ENCODE measurements at regions of chr3 and their contacts with region 1.

Region 1: GRCh38 chr3:181176601-181177000 is 187.1 kb upstream of the DNAJC19 start:
- DNase-seq: peak; percentile 21
- ATAC-seq: peak; percentile 68; the same call in 1 of the 2 replicates
- H3K4me3 Mint-ChIP-seq: no peak overlapping the region
- H3K27ac Mint-ChIP-seq: no peak overlapping the region
- H3K4me1 Mint-ChIP-seq: peaks cover 13% of the 10 kb centered on the region
- H3K27me3 Mint-ChIP-seq: no peaks in the 10 kb centered on the region; the same call in 1 of the 2 replicates
- CTCF ChIP-seq: no peak

Region 2: DNA sequence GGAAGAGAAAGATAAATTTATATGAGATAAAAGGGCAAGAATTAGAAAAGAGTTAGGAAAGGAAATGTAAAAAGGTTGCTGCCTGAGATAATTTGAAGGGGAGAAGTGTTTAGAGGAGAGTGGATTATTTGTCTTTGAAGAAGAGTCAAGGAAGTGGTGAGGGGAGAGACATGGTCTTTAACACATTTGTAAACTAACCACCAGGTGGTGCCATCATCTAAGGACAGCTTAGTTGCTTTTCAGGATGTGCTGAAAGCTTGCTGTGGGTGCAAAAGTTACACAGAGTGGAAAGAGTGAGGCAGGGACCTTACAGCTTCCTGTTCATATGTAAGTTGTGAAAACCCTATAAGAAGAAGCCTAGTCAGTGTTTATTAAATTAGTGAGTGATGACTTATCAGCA is 73.0 kb before region 1 on chr3:
- CTCF ChIA-PET with region 1: interaction called, 16 read pairs
- POLR2A ChIA-PET with region 1: no interaction called
- DNase-seq: peak; percentile 36
- ATAC-seq: peak; percentile 92
- H3K4me3 Mint-ChIP-seq: no peak overlapping the region
- H3K27ac Mint-ChIP-seq: peak overlapping the region; percentile 30; the same call in 1 of the 2 replicates
- H3K4me1 Mint-ChIP-seq: peaks cover 9% of the 10 kb centered on the region
- H3K27me3 Mint-ChIP-seq: no peaks in the 10 kb centered on the region
- CTCF ChIP-seq: peak; percentile 48

Measured in WTC11 (cell line).